T-cell (primary cell): ENCODE measurements at regions of chr4 and their contacts with region 1.

Region 1: DNA sequence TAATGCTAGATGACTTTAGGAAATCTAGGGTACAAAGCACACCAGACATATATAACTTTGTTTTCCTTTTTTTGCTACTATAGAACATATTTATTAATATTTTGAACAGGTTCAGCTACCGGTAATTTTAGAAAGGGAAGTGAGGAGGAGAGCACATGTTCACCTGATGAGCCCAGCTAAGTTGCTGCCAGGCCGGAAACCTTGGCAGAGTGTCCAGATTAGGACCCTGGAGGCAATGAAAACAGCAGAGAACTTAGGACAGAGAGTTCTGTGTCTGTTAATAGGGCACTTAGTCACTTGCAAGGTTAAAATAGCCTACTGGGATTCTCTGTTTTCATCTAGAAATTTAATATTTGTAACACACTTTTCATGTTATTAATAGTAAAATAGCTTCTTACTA is 348.9 kb upstream of the CPEB2 start:
- DNase-seq: no peak
- ATAC-seq: no peak
- H3K4me3 ChIP-seq: no peak overlapping the region
- H3K4me3 Mint-ChIP-seq: no peak overlapping the region
- H3K27ac ChIP-seq: no peak overlapping the region
- H3K27ac Mint-ChIP-seq: no peak overlapping the region
- H3K4me1 ChIP-seq: no peaks in the 10 kb centered on the region
- H3K4me1 Mint-ChIP-seq: no peaks in the 10 kb centered on the region
- H3K27me3 ChIP-seq: no peaks in the 10 kb centered on the region
- H3K27me3 Mint-ChIP-seq: peaks cover 0 to 1% of the 10 kb centered on the region in 2 donors

Region 2: GRCh38 chr4:14446311-14446710 is 207.0 kb before region 1 on chr4:
- CTCF ChIA-PET with region 1: no interaction called
- POLR2A ChIA-PET with region 1: interaction called in 1 of 2 experiments, 11 read pairs
- DNase-seq: no peak
- ATAC-seq: no peak
- H3K4me3 ChIP-seq: no peak overlapping the region
- H3K4me3 Mint-ChIP-seq: no peak overlapping the region
- H3K27ac ChIP-seq: no peak overlapping the region
- H3K27ac Mint-ChIP-seq: no peak overlapping the region
- H3K4me1 ChIP-seq: no peaks in the 10 kb centered on the region
- H3K4me1 Mint-ChIP-seq: no peaks in the 10 kb centered on the region
- H3K27me3 ChIP-seq: no peaks in the 10 kb centered on the region
- H3K27me3 Mint-ChIP-seq: no peaks in the 10 kb centered on the region

Region 3: DNA sequence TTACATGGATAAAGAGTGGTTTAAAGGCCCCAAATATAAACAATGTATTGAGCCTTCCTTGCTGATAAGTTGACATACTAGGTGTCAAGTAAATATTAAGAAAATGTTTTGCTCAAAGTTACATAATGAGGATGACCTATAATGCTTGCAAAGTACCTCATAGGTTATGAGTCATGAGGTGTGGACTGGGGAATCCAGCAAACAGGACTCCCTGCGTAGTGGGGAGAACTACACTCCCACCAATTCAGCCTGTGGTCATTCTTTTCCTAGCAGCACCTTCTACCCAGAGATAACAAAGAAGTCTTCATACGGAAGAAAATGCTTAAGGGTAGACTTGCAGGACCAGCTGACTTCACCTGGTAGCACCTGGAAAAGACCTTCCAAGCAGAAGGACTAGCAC is 70.0 kb before region 1 on chr4:
- CTCF ChIA-PET with region 1: no interaction called
- POLR2A ChIA-PET with region 1: no interaction called
- DNase-seq: no peak
- ATAC-seq: no peak
- H3K4me3 ChIP-seq: no peak overlapping the region
- H3K4me3 Mint-ChIP-seq: no peak overlapping the region
- H3K27ac ChIP-seq: no peak overlapping the region
- H3K27ac Mint-ChIP-seq: no peak overlapping the region
- H3K4me1 ChIP-seq: no peaks in the 10 kb centered on the region
- H3K4me1 Mint-ChIP-seq: no peaks in the 10 kb centered on the region
- H3K27me3 ChIP-seq: no peaks in the 10 kb centered on the region
- H3K27me3 Mint-ChIP-seq: no peaks in the 10 kb centered on the region